AG04450 (cell line): ENCODE measurements at regions of chr1 and their contacts with region 1.

Region 1: DNA sequence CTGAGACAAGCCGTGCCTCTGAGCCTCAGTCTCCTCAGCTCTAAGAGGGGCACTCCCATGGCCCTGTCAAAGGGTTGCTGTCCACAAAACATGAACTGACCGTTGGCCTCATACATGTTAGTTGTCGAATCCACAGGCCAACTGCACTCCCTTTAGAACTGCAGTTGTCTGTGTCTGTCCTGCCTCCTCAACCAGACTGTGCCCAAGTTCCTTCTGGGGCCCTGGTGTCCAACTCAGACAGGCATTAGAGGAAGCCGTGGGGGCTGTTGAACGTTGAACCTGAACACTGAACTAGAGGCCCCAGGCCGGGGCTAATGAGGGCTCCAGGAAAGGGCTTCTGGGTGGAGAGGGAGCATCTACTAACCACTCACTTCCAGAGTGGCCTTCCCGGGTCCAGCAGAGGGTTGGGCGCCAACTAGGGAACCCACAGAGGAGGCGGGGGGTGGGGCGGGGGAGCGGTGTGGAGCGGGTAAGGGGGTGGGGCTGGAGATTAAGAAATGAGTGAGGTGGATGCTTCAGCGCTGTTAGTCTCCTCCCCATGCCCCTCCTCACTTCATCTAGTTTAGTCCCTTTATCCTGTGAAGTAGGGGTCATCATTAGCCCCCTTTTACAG is at the start of gene RAB42:
- DNase-seq: no peak
- H3K4me3 ChIP-seq: peak within 1 kb of the TSS; percentile 60
- H3K27ac ChIP-seq: no peak within 1 kb of the TSS
- H3K27me3 ChIP-seq: no peaks in the 10 kb centered on the region
- CTCF ChIP-seq: no peak
- polyA plus RNA-seq, gene RAB42: 3.4 and 3.7 TPM in 2 replicates

Region 2: GRCh38 chr1:28518000-28518744 is 73.6 kb before region 1 on chr1:
- CTCF ChIA-PET with region 1: no interaction called
- POLR2A ChIA-PET with region 1: interaction called, 22 read pairs
- DNase-seq: peak; percentile 60
- H3K4me3 ChIP-seq: peak overlapping the region; percentile 81
- H3K27ac ChIP-seq: peak overlapping the region; percentile 61
- H3K27me3 ChIP-seq: no peaks in the 10 kb centered on the region
- CTCF ChIP-seq: peak; percentile 92